ENCODE measurements at regions of chr14 and their contacts with region 1.

Region 1: GRCh38 chr14:93994919-93995682 is 2.0 kb upstream of the CCDC197 start:
- DNase-seq: peak; percentile 86
- H3K4me3 Mint-ChIP-seq: no peak overlapping the region
- H3K27ac Mint-ChIP-seq: peak overlapping the region; percentile 9
- H3K4me1 Mint-ChIP-seq: peaks cover 14% of the 10 kb centered on the region
- H3K27me3 Mint-ChIP-seq: no peaks in the 10 kb centered on the region
- CTCF ChIP-seq: no peak

Region 2: GRCh38 chr14:93959239-93960107 is 35.6 kb before region 1 on chr14:
- CTCF ChIA-PET with region 1: interaction called, 4 read pairs
- POLR2A ChIA-PET with region 1: no interaction called
- intact Hi-C with region 1: loop called (anchors 1 kb)
- DNase-seq: peak; percentile 99
- H3K4me3 Mint-ChIP-seq: peak overlapping the region; percentile 18
- H3K27ac Mint-ChIP-seq: peak overlapping the region; percentile 79
- H3K4me1 Mint-ChIP-seq: peaks cover 16% of the 10 kb centered on the region
- H3K27me3 Mint-ChIP-seq: no peaks in the 10 kb centered on the region
- CTCF ChIP-seq: no peak

Region 3: DNA sequence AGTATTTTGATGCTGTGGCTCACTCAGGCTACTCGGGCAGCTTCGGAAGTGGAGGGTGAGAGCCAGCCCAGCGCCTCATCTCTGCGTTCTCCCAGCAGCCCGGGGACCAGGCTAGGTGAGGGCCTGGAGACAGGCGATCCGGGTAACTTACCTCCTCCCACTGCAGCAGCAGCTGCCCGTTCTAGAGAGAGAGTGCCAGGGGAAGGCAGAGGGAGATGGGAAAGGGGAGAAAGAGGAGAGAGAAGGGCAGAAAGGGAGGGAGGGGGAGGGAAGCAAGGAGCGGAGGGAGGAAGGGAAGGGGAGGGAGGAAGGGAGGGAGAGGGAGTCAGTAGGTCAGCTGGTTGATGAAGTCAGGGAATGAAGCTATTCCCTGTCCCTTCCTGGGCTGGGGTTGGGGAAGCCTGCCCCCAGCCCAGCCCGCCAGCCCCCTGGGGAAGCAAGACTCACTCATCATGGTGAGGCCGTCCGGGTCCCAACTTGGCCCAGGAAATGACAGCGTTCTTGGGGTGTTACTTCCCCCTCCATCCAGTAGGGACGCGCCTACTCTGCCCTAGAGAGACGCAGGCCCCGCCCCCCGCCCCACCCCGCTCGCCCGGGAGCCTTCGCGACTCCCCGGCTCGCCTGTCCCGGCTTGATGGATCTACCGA is 134.1 kb after region 1 on chr14 and contains the start of gene IFI27L2:
- CTCF ChIA-PET with region 1: no interaction called
- POLR2A ChIA-PET with region 1: no interaction called
- intact Hi-C with region 1: no loop called
- DNase-seq: peak; percentile 86
- H3K4me3 Mint-ChIP-seq: peak within 1 kb of the TSS; percentile 80
- H3K27ac Mint-ChIP-seq: peak within 1 kb of the TSS; percentile 43
- H3K4me1 Mint-ChIP-seq: peaks cover 9% of the 10 kb centered on the region
- H3K27me3 Mint-ChIP-seq: no peaks in the 10 kb centered on the region
- CTCF ChIP-seq: peak; percentile 26
- total RNA-seq, gene IFI27L2: 44.3 and 59.3 TPM in 2 replicates